Activated CD8-positive, alpha-beta memory T cell treated with anti-CD3 and anti-CD28 coated beads, Interleukin-2, amount 10 ng/mL, durations not matched to agents 7 days and 5 days (primary cell): ENCODE measurements at regions of chr5 and their contacts with region 1.

Region 1: GRCh38 chr5:38193015-38193581 is 65.3 kb upstream of the EGFLAM start:
- DNase-seq: peak; percentile 72
- ATAC-seq: peak; percentile 63
- H3K4me3 Mint-ChIP-seq: no peak overlapping the region
- H3K27ac Mint-ChIP-seq: no peak overlapping the region
- H3K4me1 Mint-ChIP-seq: no peaks in the 10 kb centered on the region
- H3K27me3 Mint-ChIP-seq: peaks cover 46% of the 10 kb centered on the region

Region 2: DNA sequence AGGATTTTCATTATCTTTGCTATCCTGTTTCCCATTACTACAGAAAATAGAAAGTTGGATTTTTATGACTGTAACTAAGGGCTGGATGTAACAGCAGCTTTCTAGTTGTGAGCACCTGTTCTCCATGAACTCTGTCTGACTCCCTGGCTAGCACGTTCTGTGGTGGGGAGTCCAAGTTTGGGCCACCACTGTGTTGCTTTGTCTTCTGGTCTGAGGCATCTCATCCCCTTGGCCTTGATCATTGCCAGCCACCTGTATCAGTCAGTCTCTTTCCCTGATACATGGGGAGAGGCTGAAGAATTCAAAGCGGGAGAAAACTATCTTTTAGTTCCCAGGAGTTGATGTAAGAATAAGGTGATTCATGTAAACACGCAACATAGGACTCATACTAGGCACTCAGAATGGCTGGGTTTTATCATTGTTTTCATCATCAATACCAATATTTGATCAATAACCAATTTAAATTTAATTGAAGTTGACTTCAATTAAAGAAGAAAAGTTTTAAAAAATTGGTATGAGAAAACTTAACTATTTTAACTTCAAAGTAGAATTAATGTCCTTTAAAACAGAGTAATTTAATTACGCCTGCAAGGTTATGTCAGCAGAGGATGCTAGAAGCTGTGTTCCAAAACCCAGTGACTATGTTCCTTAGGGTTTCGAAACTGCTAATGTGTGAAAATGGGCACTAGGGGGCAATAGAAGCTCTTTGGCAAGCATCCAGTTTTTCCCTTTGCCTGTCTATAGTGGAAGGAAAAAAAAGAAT is 780.4 kb before region 1 on chr5:
- CTCF ChIA-PET with region 1: interaction called, 21 read pairs
- DNase-seq: peak; percentile 46
- ATAC-seq: peak; percentile 39
- H3K4me3 Mint-ChIP-seq: no peak overlapping the region
- H3K27ac Mint-ChIP-seq: no peak overlapping the region
- H3K4me1 Mint-ChIP-seq: no peaks in the 10 kb centered on the region
- H3K27me3 Mint-ChIP-seq: no peaks in the 10 kb centered on the region

Region 3: DNA sequence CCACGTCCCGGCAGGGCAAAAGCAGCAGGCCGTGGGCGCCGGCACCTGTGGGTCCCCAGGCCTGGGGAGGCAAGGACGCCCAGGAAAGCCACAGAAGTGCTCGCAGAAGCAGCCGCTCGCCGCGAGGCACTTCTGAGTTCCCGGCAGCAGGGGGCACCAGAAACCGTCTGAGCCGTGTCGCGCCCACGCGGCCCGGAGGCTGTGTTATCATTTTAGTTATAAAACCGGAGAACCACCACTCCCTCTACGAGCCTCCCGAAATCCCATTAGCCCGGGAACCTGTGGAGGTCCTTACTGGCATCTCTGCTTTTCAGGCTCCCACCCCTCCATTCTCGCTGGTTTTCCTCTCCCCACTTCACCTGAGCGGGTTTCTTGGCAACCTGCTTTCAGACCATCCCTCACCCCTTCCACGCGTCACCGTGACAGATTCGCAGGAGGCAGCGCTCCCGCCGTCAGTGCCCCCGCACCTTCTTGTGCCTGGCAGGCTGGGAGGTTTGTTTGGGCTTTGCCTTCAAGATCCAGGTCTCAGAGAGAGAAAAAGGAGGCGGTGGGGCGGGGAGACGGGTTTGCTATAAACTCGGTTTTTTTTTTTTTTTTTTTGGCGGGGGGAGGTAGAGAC is 355.6 kb before region 1 on chr5:
- CTCF ChIA-PET with region 1: interaction called, 15 read pairs
- DNase-seq: peak; percentile 78
- ATAC-seq: peak; percentile 81
- H3K4me3 Mint-ChIP-seq: peak overlapping the region; percentile 43
- H3K27ac Mint-ChIP-seq: peak overlapping the region; percentile 32
- H3K4me1 Mint-ChIP-seq: peaks cover 35% of the 10 kb centered on the region
- H3K27me3 Mint-ChIP-seq: peaks cover 90% of the 10 kb centered on the region